HEK293 (cell line): ENCODE measurements at regions of chr16 and their contacts with region 1.

Region 1: GRCh38 chr16:27179500-27180072 is 23.7 kb upstream of the KDM8 start:
- H3K4me3 ChIP-seq: no peak overlapping the region
- H3K27ac ChIP-seq: no peak overlapping the region
- H3K4me1 ChIP-seq: no peaks in the 10 kb centered on the region
- CTCF ChIP-seq: peak; percentile 93

Region 2: DNA sequence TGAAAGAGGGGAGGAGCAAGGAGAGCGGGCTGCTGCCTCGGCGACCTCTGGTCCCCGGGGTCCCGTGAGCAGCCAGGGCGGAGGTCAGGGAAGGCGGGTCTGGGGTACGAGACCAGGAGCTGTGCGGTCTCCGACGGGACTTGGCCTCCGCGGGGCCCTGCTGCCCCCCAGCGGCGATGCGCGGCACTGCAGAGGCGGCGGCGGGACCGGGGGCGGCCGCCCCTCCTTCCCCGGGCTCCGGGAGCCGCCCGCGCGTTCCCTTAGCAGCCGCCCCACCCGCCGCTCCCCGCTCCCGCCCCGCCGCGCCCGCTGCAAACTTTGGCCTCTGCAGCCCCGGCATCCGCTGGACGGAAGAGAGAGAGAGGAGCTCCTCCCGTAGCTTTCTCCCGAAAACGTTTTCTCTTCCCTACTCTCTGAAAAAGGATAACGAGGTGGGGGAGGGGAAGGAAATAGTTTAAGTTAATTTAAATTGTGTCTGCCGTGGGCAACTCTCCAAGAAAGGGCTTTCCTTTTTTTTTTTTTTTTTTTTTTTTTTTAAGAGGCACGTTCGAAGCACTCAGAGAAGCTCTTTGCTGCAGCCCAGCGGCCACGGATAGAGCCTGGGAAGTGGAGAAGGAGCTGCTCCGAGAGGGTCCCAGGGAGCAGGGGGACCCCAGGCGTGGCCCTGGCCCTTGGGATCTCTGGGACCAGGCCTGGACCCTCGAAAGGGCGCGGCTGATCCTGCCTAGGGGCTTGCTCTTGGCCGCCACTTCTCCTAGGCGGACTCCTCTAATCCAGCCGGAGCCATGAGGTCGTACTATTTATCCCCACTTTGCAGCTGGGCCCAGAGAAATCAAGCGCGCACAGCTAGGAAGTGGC is 69.7 kb before region 1 on chr16:
- CTCF ChIA-PET with region 1: no interaction called
- POLR2A ChIA-PET with region 1: no interaction called
- H3K4me3 ChIP-seq: peak overlapping the region; percentile 29
- H3K27ac ChIP-seq: no peak overlapping the region
- H3K4me1 ChIP-seq: no peaks in the 10 kb centered on the region
- CTCF ChIP-seq: no peak

Region 3: DNA sequence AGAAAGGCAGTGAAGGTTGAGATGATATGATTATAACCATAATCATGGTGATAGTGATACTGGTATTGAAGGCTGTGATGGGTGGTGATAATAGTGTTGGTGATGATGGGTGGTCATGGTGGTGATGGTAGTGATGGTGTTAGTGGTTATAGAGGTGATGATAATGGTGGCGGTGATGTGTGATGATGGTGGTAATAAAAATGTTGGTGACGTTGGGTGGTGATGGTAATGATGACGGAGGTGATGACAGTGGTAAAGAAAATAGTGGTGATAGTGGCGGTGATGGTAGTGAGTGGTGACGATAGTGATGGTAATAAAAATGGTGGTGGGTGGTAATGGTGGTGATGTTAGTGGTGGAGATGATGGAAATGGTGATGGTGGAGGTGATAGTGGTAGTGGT is 41.3 kb before region 1 on chr16:
- CTCF ChIA-PET with region 1: no interaction called
- POLR2A ChIA-PET with region 1: no interaction called
- H3K4me3 ChIP-seq: no peak overlapping the region
- H3K27ac ChIP-seq: no peak overlapping the region
- H3K4me1 ChIP-seq: no peaks in the 10 kb centered on the region
- CTCF ChIP-seq: no peak

Region 4: DNA sequence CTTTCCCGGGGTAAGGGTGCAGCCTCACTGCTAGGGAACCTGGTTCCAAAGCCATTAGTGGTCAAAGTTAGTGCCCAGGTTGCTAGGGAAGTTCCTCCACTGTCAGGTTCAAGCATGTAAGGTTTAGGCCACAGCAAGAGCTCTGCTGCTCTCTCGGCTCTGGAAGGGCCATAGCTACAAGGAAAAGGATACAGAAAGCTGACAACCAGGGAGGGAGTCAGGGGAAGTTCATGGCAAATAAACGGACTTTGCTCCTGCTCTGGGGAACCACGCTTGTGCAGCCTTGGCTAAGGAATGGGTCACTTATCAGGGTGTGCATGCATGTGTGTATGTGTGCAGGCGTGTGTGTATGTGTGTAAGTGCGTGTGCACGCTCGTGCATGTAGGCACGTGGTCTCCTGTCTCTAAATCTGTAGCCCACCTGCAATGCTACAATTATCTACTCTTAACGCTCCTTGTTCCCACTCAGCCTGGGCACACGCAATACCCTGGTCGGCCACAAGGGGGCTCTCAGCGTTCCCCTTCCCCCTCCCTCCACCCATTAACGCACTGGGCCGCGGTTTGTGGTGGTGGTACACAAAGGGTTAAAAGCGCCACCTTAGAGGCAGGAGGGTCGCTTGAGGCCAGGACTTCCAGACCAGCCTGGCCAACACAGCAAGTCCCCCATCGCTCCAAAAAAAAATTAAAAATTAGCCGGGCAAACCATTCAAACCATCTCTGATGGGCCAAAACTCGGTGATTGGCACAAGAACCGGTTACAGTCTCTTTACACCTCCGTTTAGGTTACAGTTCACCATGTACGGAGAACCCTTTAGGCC is 24.7 kb before region 1 on chr16:
- CTCF ChIA-PET with region 1: interaction called, 20 read pairs
- POLR2A ChIA-PET with region 1: no interaction called
- H3K4me3 ChIP-seq: no peak overlapping the region
- H3K27ac ChIP-seq: no peak overlapping the region
- H3K4me1 ChIP-seq: no peaks in the 10 kb centered on the region
- CTCF ChIP-seq: peak; percentile 76

Region 5: GRCh38 chr16:27164352-27164751 is 15.2 kb before region 1 on chr16:
- CTCF ChIA-PET with region 1: interaction called, 31 read pairs
- POLR2A ChIA-PET with region 1: no interaction called
- H3K4me3 ChIP-seq: no peak overlapping the region
- H3K27ac ChIP-seq: no peak overlapping the region
- H3K4me1 ChIP-seq: no peaks in the 10 kb centered on the region
- CTCF ChIP-seq: no peak

Region 6: DNA sequence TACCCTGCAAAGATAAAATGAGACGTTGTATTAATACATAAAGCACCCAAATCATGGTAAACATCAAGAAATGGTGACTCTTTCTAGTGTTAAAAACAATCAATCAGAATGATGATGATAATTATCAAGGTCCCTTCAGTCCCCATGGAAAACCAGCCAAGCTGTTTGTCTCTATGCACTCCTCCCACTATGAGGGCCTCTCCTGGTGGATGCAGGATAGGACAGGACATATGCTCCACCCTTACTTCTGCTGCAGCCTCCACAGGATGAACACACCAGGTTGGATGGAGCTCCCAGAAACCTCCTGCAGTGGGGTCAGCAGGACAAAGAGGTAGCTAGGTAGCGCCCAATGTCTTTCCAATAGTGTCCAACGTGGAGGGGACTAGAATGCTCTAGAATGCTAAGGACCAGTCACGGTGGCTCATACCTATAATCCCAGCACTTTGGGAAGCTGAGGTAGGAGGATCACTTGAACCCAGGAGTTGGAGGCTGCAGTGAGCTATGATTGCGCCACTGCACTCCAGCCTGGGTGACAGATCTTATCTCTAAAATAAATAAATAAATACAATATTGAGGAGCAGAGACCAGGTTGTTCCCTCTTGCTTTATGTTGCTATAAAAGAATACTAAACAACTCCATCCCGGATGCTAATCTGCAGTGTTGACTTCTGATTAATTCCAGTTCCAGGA is 13.9 kb after region 1 on chr16:
- CTCF ChIA-PET with region 1: interaction called, 14 read pairs
- POLR2A ChIA-PET with region 1: no interaction called
- H3K4me3 ChIP-seq: no peak overlapping the region
- H3K27ac ChIP-seq: no peak overlapping the region
- H3K4me1 ChIP-seq: no peaks in the 10 kb centered on the region
- CTCF ChIP-seq: no peak

Region 7: GRCh38 chr16:27235055-27235937 is 55.7 kb after region 1 on chr16:
- CTCF ChIA-PET with region 1: interaction called, 12 read pairs
- POLR2A ChIA-PET with region 1: no interaction called
- H3K4me3 ChIP-seq: no peak overlapping the region
- H3K27ac ChIP-seq: no peak overlapping the region
- H3K4me1 ChIP-seq: peaks cover 4% of the 10 kb centered on the region; the same call in 1 of the 2 replicates
- CTCF ChIP-seq: peak; percentile 40

Region 8: DNA sequence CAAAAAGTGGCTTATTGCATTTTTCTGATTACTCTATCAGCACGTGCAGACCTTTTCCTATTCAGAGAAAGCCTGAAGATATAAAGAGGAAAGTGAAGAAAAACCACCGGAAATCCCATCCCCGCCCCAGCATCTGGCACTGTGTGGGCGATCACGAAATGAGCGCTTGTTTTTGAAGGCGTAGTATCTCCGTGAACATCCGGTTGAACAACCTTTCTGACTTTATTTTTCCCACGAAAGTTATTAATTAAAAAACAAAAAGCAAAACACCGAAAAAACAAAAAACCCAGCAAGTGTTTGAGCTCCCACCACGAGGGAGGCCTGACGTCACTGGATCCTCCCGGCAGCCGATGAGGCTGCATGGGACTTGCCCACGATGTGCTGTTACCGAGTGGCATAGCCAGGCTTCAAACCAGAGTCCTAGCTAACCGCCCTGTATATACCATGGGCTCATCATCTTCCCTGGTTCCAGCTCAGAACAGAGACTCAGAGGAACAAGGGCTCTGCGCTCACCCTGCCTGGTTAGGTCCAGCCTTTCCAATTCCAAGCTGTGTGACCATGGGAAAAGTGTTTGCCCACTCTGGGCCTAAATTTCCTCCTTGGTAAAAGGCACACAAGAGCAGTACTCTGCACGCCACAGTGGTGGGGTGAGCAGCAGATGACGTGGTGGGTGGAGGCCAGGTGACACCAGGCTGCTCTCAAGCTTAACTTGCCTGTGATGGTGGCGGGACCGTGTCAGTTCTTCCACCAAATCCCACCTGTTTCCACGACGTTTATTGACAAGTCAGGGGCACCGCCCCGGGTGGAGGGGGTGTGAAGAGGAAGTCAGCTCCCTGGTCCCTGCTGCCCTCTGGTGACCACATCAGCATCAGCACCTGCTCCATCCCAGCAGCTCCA is 188.1 kb after region 1 on chr16:
- CTCF ChIA-PET with region 1: interaction called, 69 read pairs
- POLR2A ChIA-PET with region 1: no interaction called
- H3K4me3 ChIP-seq: no peak overlapping the region
- H3K27ac ChIP-seq: no peak overlapping the region
- H3K4me1 ChIP-seq: no peaks in the 10 kb centered on the region; the same call in 1 of the 2 replicates
- CTCF ChIP-seq: peak; percentile 67